A549 (cell line): ENCODE measurements at regions of chr19 and their contacts with region 1.

Region 1: DNA sequence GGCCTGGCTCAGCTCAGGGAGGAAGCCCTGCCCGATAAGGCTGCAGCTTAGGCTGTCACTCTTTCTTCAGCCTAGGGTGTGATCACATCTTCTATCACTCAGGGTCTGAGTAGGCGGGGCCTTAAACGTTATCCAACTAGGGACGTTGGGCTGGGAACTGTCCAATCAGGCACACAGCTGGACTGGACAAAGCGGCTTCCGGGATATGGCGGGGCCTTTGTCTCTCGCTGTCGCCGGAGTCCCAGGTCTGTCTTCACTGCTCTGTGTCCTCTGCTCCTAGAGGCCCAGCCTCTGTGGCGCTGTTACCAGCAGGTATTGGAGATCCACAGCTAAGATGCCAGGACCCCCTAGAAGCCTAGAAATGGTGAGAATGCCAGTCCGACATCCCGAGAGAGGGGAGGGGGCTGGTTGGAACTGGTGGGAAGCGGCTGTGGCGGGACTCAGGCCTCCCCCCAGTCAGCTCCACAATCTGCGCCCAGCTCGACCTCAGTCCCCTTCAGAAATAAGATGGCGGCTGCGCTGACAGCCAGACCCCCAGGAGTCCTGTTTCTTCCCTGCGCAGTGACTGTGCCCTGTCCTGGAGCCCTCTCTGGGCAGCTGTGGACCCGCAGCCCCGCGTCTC is at the start of gene ZNF254:
- DNase-seq: peak; percentile 96 to 98
- ATAC-seq: peak; percentile 100
- H3K4me3 ChIP-seq: peak within 1 kb of the TSS; percentile 70
- H3K27ac ChIP-seq: peak within 1 kb of the TSS; percentile 79 to 92
- H3K4me1 ChIP-seq: no peaks in the 10 kb centered on the region
- CTCF ChIP-seq: no peak
- EP300 ChIP-seq: no peak
- POLR2A ChIP-seq: peak; percentile 81
- RAD21 ChIP-seq: no peak
- polyA plus RNA-seq, gene ZNF254: 10.0 and 12.1 TPM in 2 replicates

Region 2: GRCh38 chr19:24033301-24033962 is 53.7 kb before region 1 on chr19:
- CTCF ChIA-PET with region 1: interaction called, 10 read pairs
- POLR2A ChIA-PET with region 1: interaction called, 37 read pairs
- DNase-seq: peak; percentile 94 to 96
- ATAC-seq: peak; percentile 96 to 99
- H3K4me3 ChIP-seq: peak overlapping the region; percentile 80
- H3K27ac ChIP-seq: peak overlapping the region; percentile 88 to 94
- H3K4me1 ChIP-seq: peaks cover 5% of the 10 kb centered on the region; the same call in 1 of the 3 replicates
- CTCF ChIP-seq: peak; percentile 19; the same call in 1 of the 3 replicates
- EP300 ChIP-seq: no peak
- POLR2A ChIP-seq: peak; percentile 77
- RAD21 ChIP-seq: peak; percentile 26 to 29; a peak in 3 of 5 replicates

Region 3: DNA sequence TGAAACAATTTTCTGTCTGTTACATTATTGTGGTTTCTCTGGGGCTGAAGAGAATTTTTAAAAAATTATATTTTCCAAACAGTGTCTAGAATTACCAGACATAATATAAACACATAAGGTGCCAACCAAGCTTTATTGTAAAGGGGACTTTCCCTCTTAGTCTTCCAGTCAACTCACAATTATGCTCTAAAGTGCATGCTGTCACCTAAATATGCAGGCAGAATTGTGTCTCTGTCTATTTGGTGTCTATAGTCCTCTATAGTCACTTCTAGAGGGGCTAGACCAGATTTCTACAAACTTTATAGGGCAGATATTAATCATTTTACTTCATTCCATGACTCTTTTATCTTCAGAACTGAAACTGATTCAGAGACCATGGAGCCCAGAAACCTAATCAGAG is 12.7 kb after region 1 on chr19:
- CTCF ChIA-PET with region 1: interaction called, 3 read pairs
- POLR2A ChIA-PET with region 1: interaction called, 10 read pairs
- DNase-seq: no peak
- ATAC-seq: no peak
- H3K4me3 ChIP-seq: no peak overlapping the region
- H3K27ac ChIP-seq: no peak overlapping the region
- H3K4me1 ChIP-seq: no peaks in the 10 kb centered on the region
- CTCF ChIP-seq: no peak
- EP300 ChIP-seq: no peak
- POLR2A ChIP-seq: no peak
- RAD21 ChIP-seq: no peak

Region 4: GRCh38 chr19:24127601-24128000 is 40.5 kb after region 1 on chr19:
- CTCF ChIA-PET with region 1: no interaction called
- POLR2A ChIA-PET with region 1: no interaction called
- DNase-seq: peak in 1 of 2 experiments; percentile 9
- ATAC-seq: no peak
- H3K4me3 ChIP-seq: no peak overlapping the region
- H3K27ac ChIP-seq: no peak overlapping the region
- H3K4me1 ChIP-seq: no peaks in the 10 kb centered on the region
- CTCF ChIP-seq: no peak
- EP300 ChIP-seq: no peak
- POLR2A ChIP-seq: no peak
- RAD21 ChIP-seq: no peak